IMR-90 (cell line): ENCODE measurements at regions of chr12 and their contacts with region 1.

Region 1: GRCh38 chr12:22536971-22537544 is 7.3 kb downstream of the C2CD5 start:
- DNase-seq: no peak
- ATAC-seq: no peak; the same call in 1 of the 2 replicates
- H3K4me3 ChIP-seq: no peak overlapping the region
- H3K27ac ChIP-seq: no peak overlapping the region
- H3K4me1 ChIP-seq: peaks cover 3% of the 10 kb centered on the region
- H3K27me3 ChIP-seq: no peaks in the 10 kb centered on the region
- CTCF ChIP-seq: no peak
- POLR2A ChIP-seq: no peak
- RAD21 ChIP-seq: no peak

Region 2: GRCh38 chr12:22173177-22173576 is 363.9 kb before region 1 on chr12:
- CTCF ChIA-PET with region 1: no interaction called
- POLR2A ChIA-PET with region 1: no interaction called
- dilution Hi-C with region 1: no loop called
- in situ Hi-C with region 1: no loop called
- intact Hi-C with region 1: no loop called
- DNase-seq: no peak
- ATAC-seq: no peak
- H3K4me3 ChIP-seq: no peak overlapping the region
- H3K27ac ChIP-seq: no peak overlapping the region
- H3K4me1 ChIP-seq: no peaks in the 10 kb centered on the region
- H3K27me3 ChIP-seq: no peaks in the 10 kb centered on the region
- CTCF ChIP-seq: no peak
- POLR2A ChIP-seq: no peak
- RAD21 ChIP-seq: no peak

Region 3: GRCh38 chr12:22334410-22335290 is 202.4 kb before region 1 on chr12 and contains the start of gene ST8SIA1:
- CTCF ChIA-PET with region 1: no interaction called
- POLR2A ChIA-PET with region 1: no interaction called
- dilution Hi-C with region 1: no loop called
- in situ Hi-C with region 1: no loop called
- intact Hi-C with region 1: no loop called
- DNase-seq: no peak
- ATAC-seq: peak; percentile 38
- H3K4me3 ChIP-seq: peak within 1 kb of the TSS; percentile 49
- H3K27ac ChIP-seq: no peak within 1 kb of the TSS
- H3K4me1 ChIP-seq: peaks cover 2% of the 10 kb centered on the region; the same call in 1 of the 2 replicates
- H3K27me3 ChIP-seq: peaks cover 33% of the 10 kb centered on the region
- CTCF ChIP-seq: no peak
- POLR2A ChIP-seq: no peak
- RAD21 ChIP-seq: no peak
- total RNA-seq, gene ST8SIA1: 0.28 TPM in 1 of 2 replicates, not detected in the other

Region 4: GRCh38 chr12:22562036-22563028 is 25.3 kb after region 1 on chr12:
- CTCF ChIA-PET with region 1: no interaction called
- POLR2A ChIA-PET with region 1: interaction called, 22 read pairs
- dilution Hi-C with region 1: no loop called
- in situ Hi-C with region 1: no loop called
- intact Hi-C with region 1: no loop called
- DNase-seq: no peak
- ATAC-seq: no peak
- H3K4me3 ChIP-seq: no peak overlapping the region
- H3K27ac ChIP-seq: no peak overlapping the region
- H3K4me1 ChIP-seq: no peaks in the 10 kb centered on the region
- H3K27me3 ChIP-seq: peaks cover 6% of the 10 kb centered on the region
- CTCF ChIP-seq: no peak
- POLR2A ChIP-seq: no peak
- RAD21 ChIP-seq: no peak

Region 5: DNA sequence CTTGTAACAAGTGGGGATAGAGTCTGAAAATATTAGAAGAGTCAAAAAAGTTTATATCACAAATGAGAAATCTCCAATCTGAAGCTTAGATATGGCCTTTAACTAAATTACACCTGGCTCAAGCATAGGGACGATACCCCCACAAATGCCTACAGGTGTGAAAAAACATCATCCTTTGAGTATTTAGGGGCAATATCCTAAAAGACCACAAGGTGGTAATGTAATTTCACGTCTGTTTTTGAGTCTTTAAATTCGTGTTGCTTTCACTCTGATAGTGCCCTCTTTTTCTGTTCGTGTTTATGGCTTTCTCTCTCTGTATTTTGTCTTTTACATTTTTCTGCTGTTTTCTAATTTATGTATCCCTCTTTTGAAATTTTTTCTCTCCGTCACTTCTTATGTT is 172.2 kb after region 1 on chr12:
- CTCF ChIA-PET with region 1: no interaction called
- POLR2A ChIA-PET with region 1: no interaction called
- dilution Hi-C with region 1: no loop called
- in situ Hi-C with region 1: no loop called
- intact Hi-C with region 1: no loop called
- DNase-seq: no peak
- ATAC-seq: no peak
- H3K4me3 ChIP-seq: no peak overlapping the region
- H3K27ac ChIP-seq: no peak overlapping the region
- H3K4me1 ChIP-seq: no peaks in the 10 kb centered on the region
- H3K27me3 ChIP-seq: peaks cover 4% of the 10 kb centered on the region; the same call in 1 of the 2 replicates
- CTCF ChIP-seq: peak; percentile 29; the same call in 1 of the 2 replicates
- POLR2A ChIP-seq: no peak
- RAD21 ChIP-seq: peak; percentile 31; the same call in 1 of the 2 replicates